ENCODE measurements at regions of chr12 and their contacts with region 1.

Region 1: DNA sequence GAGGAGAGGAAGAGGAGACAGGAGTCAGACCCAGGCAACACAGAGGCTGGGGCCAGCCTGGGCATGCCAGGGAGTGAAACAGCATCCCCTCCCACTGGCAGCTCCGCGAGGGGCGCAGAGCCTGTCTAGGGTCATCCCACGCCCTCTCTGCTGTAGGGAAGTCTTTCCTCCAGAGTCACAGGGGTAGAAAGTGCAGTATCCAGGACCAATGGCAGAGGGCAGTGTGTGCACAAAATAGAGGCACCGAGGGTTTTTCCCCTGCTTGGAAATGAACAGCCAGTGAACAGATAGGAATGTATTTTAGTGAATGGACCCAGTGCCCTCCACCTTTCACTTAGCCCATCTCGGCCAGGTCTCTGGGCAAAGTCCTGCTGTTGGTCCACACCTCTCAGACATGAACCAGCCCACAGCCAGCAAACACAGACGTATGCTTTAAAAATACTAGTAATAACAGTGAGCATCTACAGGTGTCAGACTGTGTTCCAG is 9.4 kb upstream of the KRT74 start:
- DNase-seq: peak; percentile 53 to 80
- H3K4me3 ChIP-seq: no peak overlapping the region
- H3K27ac ChIP-seq: no peak overlapping the region
- H3K4me1 ChIP-seq: peaks cover 19% of the 10 kb centered on the region
- H3K27me3 ChIP-seq: no peaks in the 10 kb centered on the region
- CTCF ChIP-seq: peak; percentile 85

Region 2: DNA sequence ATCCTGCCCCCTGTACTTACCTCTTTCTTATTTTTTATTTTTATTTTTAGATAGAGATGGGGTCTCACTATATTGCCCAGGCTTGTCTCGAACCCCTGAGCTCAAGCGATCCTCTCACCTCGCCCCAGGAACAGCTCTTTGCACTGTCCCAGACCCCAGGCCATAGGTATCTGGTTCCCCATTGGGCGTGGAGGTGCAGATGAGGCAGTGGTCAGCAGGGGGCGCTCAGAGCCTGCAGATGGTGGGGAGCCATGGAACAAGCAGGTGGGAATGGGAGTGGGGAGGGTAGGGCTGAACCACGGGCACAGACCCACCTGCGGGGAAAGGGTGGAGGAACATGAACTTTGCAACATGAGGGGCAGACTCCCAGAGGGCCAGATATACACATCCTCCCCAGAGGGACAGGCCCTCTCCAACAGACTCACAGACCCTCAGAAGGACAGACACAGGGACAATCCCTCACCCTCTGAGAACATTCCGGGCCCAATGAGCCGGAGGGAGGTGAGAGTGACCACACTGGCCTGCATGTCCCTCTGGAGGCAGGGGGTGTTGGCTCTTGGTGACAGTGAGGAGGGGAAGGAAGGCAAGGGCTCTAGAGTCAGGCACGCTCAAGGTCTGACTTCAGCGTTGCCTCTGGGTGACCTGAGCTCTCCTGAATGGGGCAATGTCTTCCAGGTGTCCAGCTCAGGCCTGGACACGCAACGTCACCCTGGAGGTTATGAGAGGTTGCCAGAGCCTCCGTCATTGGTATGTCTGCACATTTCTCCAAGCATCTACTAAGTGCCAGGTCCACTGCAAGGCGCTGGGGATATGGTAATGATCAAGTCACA is 426.1 kb before region 1 on chr12:
- CTCF ChIA-PET with region 1: interaction called, 3 read pairs
- POLR2A ChIA-PET with region 1: no interaction called
- intact Hi-C with region 1: loop called (anchors 1 kb)
- DNase-seq: peak; percentile 54 to 82
- H3K4me3 ChIP-seq: no peak overlapping the region
- H3K27ac ChIP-seq: no peak overlapping the region
- H3K4me1 ChIP-seq: peaks cover 58% of the 10 kb centered on the region
- H3K27me3 ChIP-seq: no peaks in the 10 kb centered on the region
- CTCF ChIP-seq: peak; percentile 99

Region 3: GRCh38 chr12:52390739-52391617 is 192.0 kb before region 1 on chr12:
- CTCF ChIA-PET with region 1: interaction called, 7 read pairs
- POLR2A ChIA-PET with region 1: no interaction called
- intact Hi-C with region 1: loop called (anchors 2 kb)
- DNase-seq: peak in 1 of 2 experiments; percentile 31
- H3K4me3 ChIP-seq: no peak overlapping the region
- H3K27ac ChIP-seq: no peak overlapping the region
- H3K4me1 ChIP-seq: no peaks in the 10 kb centered on the region
- H3K27me3 ChIP-seq: no peaks in the 10 kb centered on the region
- CTCF ChIP-seq: peak; percentile 83

Region 4: GRCh38 chr12:52495389-52495788 is 87.6 kb before region 1 on chr12:
- CTCF ChIA-PET with region 1: no interaction called
- POLR2A ChIA-PET with region 1: no interaction called
- intact Hi-C with region 1: loop called (anchors 5 kb)
- DNase-seq: peak in 1 of 2 experiments; percentile 51
- H3K4me3 ChIP-seq: no peak overlapping the region
- H3K27ac ChIP-seq: no peak overlapping the region
- H3K4me1 ChIP-seq: peaks cover 41% of the 10 kb centered on the region
- H3K27me3 ChIP-seq: no peaks in the 10 kb centered on the region
- CTCF ChIP-seq: no peak

Region 5: DNA sequence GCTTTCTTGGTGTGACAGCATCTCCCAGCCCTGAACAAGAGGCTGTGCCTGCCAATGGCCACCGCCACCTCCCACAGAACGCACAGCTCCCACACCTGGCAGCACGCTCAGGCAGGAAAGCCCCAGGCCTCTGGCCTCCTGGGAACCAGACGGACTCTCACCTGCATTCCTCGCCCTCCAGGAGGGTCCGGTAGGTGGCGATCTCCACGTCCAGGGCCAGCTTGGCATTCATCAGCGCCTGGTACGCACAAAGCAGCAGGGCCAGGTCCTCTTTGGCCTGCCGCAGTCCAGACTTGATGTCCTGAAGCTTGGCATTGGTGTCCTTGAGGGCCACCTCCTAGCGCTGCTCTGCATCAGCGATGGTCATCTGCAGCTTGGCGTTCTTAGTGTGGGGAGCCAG is 132.4 kb after region 1 on chr12:
- CTCF ChIA-PET with region 1: no interaction called
- POLR2A ChIA-PET with region 1: no interaction called
- intact Hi-C with region 1: no loop called
- DNase-seq: no peak
- H3K4me3 ChIP-seq: no peak overlapping the region
- H3K27ac ChIP-seq: no peak overlapping the region
- H3K4me1 ChIP-seq: no peaks in the 10 kb centered on the region
- H3K27me3 ChIP-seq: no peaks in the 10 kb centered on the region
- CTCF ChIP-seq: no peak

Region 6: DNA sequence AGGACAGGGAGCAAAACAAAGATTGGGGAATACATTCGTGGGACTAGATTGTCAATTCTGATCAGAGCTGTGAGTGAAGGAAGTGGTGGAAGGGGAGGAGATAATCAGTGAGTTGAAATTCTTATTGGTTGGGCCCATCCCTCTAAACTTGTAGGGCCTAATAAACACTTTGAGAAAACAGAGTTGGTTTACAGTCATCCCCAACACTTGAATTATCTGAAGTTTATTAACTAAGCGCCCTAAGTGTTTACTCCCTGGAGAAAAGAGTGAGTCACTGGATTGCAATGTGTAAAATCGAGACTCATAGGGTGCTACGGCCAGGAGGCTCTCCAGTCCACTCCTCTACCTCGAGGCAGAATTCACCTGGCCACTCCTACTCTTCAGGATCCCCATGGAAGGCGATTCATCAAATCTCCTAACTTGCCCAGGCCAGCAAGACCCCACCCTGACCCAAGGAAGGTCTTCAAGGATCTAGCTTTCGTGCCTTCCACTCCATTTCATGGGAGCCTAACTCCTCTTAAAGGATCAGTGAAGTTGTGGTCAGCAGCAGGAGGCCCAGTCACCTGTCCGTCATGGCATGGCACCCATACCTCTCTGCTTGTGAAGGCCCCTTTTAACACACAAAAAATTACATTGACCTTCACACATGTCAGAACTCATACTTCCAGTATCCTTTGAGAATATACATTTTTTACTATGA is 216.2 kb after region 1 on chr12:
- CTCF ChIA-PET with region 1: interaction called, 3 read pairs
- POLR2A ChIA-PET with region 1: no interaction called
- intact Hi-C with region 1: loop called (anchors 1 kb)
- DNase-seq: peak; percentile 67 to 97
- H3K4me3 ChIP-seq: no peak overlapping the region
- H3K27ac ChIP-seq: peak overlapping the region; percentile 88
- H3K4me1 ChIP-seq: peaks cover 65% of the 10 kb centered on the region
- H3K27me3 ChIP-seq: no peaks in the 10 kb centered on the region
- CTCF ChIP-seq: no peak

Region 7: GRCh38 chr12:52980693-52981423 is 397.8 kb after region 1 on chr12:
- CTCF ChIA-PET with region 1: no interaction called
- POLR2A ChIA-PET with region 1: no interaction called
- intact Hi-C with region 1: loop called (anchors 1 kb)
- DNase-seq: peak; percentile 87 to 91
- H3K4me3 ChIP-seq: no peak overlapping the region
- H3K27ac ChIP-seq: no peak overlapping the region
- H3K4me1 ChIP-seq: peaks cover 26% of the 10 kb centered on the region
- H3K27me3 ChIP-seq: no peaks in the 10 kb centered on the region
- CTCF ChIP-seq: peak; percentile 98

Region 8: GRCh38 chr12:53098982-53099651 is 516.1 kb after region 1 on chr12:
- CTCF ChIA-PET with region 1: no interaction called
- POLR2A ChIA-PET with region 1: no interaction called
- intact Hi-C with region 1: no loop called
- DNase-seq: peak; percentile 90 to 92
- H3K4me3 ChIP-seq: peak overlapping the region; percentile 96
- H3K27ac ChIP-seq: peak overlapping the region; percentile 87
- H3K4me1 ChIP-seq: peaks cover 22% of the 10 kb centered on the region
- H3K27me3 ChIP-seq: no peaks in the 10 kb centered on the region
- CTCF ChIP-seq: peak; percentile 95

Measured in PC-9 (cell line).